Endothelial cell of umbilical vein (primary cell): ENCODE measurements at regions of chr18 and their contacts with region 1.

Region 1: DNA sequence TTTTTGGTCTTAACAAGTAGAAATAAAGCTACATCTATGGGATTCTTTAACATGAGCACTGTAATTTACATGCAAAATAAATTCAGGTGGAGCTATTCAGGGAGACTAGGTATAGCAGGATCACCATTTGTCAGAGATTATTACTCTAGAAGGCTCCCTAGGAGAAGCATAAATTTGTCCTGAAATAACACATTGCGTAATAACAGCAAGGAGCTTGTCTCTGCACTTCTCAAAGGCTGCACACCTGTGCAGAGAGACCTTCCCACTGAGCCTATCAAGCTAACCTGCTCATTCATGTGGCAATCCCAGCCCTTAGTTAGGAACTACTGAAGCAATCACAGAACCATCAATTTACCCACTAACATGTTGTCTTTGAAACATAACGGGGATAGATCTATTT is 437.4 kb upstream of the MC4R start:
- DNase-seq: no peak
- H3K4me3 ChIP-seq: no peak overlapping the region
- H3K27ac ChIP-seq: no peak overlapping the region
- H3K4me1 ChIP-seq: no peaks in the 10 kb centered on the region
- H3K27me3 ChIP-seq: no peaks in the 10 kb centered on the region
- CTCF ChIP-seq: no peak
- POLR2A ChIP-seq: no peak

Region 2: GRCh38 chr18:59733421-59733820 is 1076.5 kb before region 1 on chr18:
- CTCF ChIA-PET with region 1: no interaction called
- POLR2A ChIA-PET with region 1: no interaction called
- dilution Hi-C with region 1: no loop called
- intact Hi-C with region 1: no loop called
- DNase-seq: no peak
- H3K4me3 ChIP-seq: no peak overlapping the region
- H3K27ac ChIP-seq: no peak overlapping the region
- H3K4me1 ChIP-seq: no peaks in the 10 kb centered on the region
- H3K27me3 ChIP-seq: no peaks in the 10 kb centered on the region
- CTCF ChIP-seq: no peak
- POLR2A ChIP-seq: no peak

Region 3: GRCh38 chr18:60794802-60795201 is 15.1 kb before region 1 on chr18:
- CTCF ChIA-PET with region 1: interaction called, 10 read pairs
- POLR2A ChIA-PET with region 1: no interaction called
- dilution Hi-C with region 1: no loop called
- intact Hi-C with region 1: no loop called
- DNase-seq: no peak
- H3K4me3 ChIP-seq: no peak overlapping the region
- H3K27ac ChIP-seq: no peak overlapping the region
- H3K4me1 ChIP-seq: no peaks in the 10 kb centered on the region
- H3K27me3 ChIP-seq: no peaks in the 10 kb centered on the region
- CTCF ChIP-seq: no peak
- POLR2A ChIP-seq: no peak

Region 4: GRCh38 chr18:60905699-60906098 is 95.8 kb after region 1 on chr18:
- CTCF ChIA-PET with region 1: interaction called, 13 read pairs
- POLR2A ChIA-PET with region 1: no interaction called
- dilution Hi-C with region 1: no loop called
- intact Hi-C with region 1: no loop called
- DNase-seq: peak; percentile 86
- H3K4me3 ChIP-seq: no peak overlapping the region
- H3K27ac ChIP-seq: no peak overlapping the region
- H3K4me1 ChIP-seq: peaks cover 6% of the 10 kb centered on the region
- H3K27me3 ChIP-seq: no peaks in the 10 kb centered on the region
- CTCF ChIP-seq: no peak
- POLR2A ChIP-seq: no peak

Region 5: DNA sequence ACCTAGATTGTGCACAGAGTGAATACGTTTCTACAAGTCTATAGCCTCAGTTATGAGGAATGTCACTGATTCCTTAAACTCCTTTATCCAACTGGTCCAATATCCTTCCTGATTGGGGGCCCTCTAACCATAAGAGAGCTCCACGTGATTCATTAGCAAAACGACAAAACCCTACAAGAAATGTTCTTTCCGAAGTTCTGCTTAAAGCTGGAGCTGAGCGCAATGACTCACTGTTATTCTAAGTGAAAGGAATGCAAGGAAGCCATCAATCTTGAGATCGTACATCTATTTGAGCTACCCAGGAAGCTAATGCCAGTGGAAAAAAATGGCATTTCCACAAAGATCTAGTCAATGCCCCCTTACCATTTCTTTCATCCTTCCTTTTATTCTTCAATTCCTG is 168.4 kb after region 1 on chr18:
- CTCF ChIA-PET with region 1: interaction called, 26 read pairs
- POLR2A ChIA-PET with region 1: no interaction called
- dilution Hi-C with region 1: no loop called
- intact Hi-C with region 1: loop called (anchors 5 kb)
- DNase-seq: peak; percentile 93
- H3K4me3 ChIP-seq: no peak overlapping the region
- H3K27ac ChIP-seq: peak overlapping the region; percentile 21
- H3K4me1 ChIP-seq: peaks cover 45% of the 10 kb centered on the region
- H3K27me3 ChIP-seq: no peaks in the 10 kb centered on the region
- CTCF ChIP-seq: no peak
- POLR2A ChIP-seq: no peak

Region 6: DNA sequence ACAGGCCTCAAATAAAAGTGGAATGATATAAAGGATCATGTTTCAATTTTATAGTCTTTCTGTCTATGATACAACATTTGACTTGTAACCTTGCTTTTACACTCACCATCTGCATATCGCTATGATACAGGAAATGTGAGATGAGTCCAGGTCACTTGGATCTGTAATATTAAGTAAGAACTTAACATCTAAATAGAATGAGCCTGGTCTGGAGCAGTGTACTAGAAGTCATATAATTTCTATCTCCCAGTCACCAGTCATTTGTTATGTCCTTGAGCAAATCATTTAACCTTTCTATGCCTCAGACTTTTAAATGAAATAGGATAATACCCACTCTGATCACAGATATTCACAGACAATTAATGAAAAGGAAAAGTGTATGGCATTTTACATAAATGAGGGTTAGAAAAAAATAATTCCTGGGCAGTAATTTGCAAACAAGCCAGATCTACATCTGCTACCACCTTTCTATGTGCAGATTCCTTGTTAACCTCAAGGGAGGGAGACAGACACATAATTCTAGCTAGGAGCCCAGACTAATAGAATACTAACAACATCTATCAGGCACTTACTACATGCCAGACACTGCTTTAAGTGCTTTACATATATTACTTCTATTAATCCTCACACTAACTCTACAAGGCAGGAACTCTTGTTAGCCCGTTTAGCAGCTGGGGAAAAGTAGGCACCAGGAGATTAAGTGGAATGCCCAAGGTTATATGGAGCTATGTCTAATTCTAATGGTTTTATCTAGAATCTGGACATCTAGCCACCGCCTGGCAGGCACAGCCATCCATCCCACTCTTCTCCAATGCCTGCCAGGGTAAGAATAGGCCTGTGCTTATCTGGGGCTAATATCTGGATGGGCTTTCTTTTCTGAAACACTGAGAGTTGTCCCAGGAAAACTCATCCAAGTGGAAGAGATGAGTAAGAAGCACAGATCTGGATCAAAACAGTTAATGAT is 209.7 kb after region 1 on chr18:
- CTCF ChIA-PET with region 1: interaction called, 12 read pairs
- POLR2A ChIA-PET with region 1: no interaction called
- dilution Hi-C with region 1: no loop called
- intact Hi-C with region 1: no loop called
- DNase-seq: no peak
- H3K4me3 ChIP-seq: no peak overlapping the region
- H3K27ac ChIP-seq: no peak overlapping the region
- H3K4me1 ChIP-seq: no peaks in the 10 kb centered on the region
- H3K27me3 ChIP-seq: no peaks in the 10 kb centered on the region
- CTCF ChIP-seq: no peak
- POLR2A ChIP-seq: no peak

Region 7: DNA sequence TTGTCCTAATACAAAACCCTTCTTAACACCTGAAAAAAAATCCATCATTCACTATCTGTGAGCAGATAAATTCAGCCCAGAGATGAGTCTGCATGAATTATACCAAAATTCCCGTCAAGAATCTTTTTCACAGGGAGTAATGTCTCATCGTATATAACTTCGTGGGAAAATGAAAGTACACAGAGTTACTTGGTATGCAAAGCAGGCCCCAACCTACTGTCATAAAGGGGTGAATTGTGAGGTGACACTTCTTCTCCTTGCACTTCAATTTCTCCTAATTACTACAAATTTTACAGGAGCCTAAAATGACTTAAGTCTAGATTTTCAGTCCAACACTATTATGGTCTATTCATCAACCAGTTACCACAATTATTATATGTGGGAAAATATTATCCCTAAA is 438.7 kb after region 1 on chr18:
- CTCF ChIA-PET with region 1: interaction called, 12 read pairs
- POLR2A ChIA-PET with region 1: no interaction called
- dilution Hi-C with region 1: no loop called
- intact Hi-C with region 1: no loop called
- DNase-seq: no peak
- H3K4me3 ChIP-seq: no peak overlapping the region
- H3K27ac ChIP-seq: no peak overlapping the region
- H3K4me1 ChIP-seq: no peaks in the 10 kb centered on the region
- H3K27me3 ChIP-seq: peaks cover 0 to 1% of the 10 kb centered on the region in 2 experiments
- CTCF ChIP-seq: no peak
- POLR2A ChIP-seq: no peak

Region 8: GRCh38 chr18:61371111-61371510 is 561.2 kb after region 1 on chr18:
- CTCF ChIA-PET with region 1: no interaction called
- POLR2A ChIA-PET with region 1: no interaction called
- dilution Hi-C with region 1: no loop called
- intact Hi-C with region 1: no loop called
- DNase-seq: no peak
- H3K4me3 ChIP-seq: no peak overlapping the region
- H3K27ac ChIP-seq: no peak overlapping the region
- H3K4me1 ChIP-seq: no peaks in the 10 kb centered on the region
- H3K27me3 ChIP-seq: peaks cover 3 to 7% of the 10 kb centered on the region in 2 experiments
- CTCF ChIP-seq: no peak
- POLR2A ChIP-seq: no peak

Region 9: GRCh38 chr18:61502472-61502871 is 692.5 kb after region 1 on chr18:
- CTCF ChIA-PET with region 1: interaction called, 133 read pairs
- POLR2A ChIA-PET with region 1: no interaction called
- dilution Hi-C with region 1: no loop called
- intact Hi-C with region 1: no loop called
- DNase-seq: peak; percentile 65
- H3K4me3 ChIP-seq: no peak overlapping the region
- H3K27ac ChIP-seq: no peak overlapping the region
- H3K4me1 ChIP-seq: no peaks in the 10 kb centered on the region
- H3K27me3 ChIP-seq: peaks cover 0 to 2% of the 10 kb centered on the region in 2 experiments
- CTCF ChIP-seq: peak; percentile 58 to 64
- POLR2A ChIP-seq: no peak